Naive thymus-derived CD4-positive, alpha-beta T cell (primary cell): ENCODE measurements at regions of chr16 and their contacts with region 1.

Region 1: DNA sequence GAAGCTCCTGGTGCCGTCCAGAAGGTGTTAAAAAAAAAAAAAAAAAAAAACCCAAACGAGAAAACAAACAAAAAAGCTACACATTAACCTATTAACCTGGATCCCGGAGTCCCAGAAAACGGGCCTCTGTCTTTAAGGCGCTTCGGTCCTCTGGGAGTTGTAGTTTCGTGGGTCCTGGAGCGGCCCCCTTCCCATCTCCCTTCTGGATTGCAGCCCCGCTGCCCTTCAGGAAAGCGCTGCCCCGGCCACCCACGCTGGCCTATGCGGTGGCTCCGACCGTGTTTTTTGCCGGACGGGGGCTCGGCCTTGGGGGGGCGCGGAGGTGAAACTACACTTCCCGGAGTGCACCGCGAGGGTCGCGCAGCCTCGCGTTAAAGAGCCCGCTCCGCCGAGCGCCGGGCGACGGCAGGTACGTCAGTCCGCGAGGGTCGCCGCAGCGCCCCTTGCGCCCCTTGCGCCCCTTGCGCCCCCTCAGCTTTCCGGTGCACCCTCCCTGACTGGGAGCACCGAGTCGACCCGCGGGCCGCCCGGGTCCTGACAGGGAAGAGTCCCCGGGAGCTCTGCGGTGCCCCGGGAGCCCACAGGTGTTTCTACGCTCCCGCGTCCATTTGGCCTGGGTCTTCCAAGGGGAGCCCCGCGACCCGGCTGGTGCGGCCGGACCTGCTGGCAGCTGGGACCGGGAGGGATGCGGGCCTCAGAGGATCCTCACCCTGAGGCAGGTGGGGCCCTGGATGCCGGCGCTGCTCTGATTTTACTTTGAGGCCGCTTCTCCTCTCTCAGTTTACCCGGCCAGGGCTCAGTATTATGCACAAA is at the start of gene FCSK:
- DNase-seq: peak; percentile 63 to 88 (median 84)
- ATAC-seq: peak; percentile 94
- H3K4me3 ChIP-seq: peak within 1 kb of the TSS; percentile 82
- H3K4me3 Mint-ChIP-seq: peak within 1 kb of the TSS; percentile 90 to 95 (median 93)
- H3K27ac ChIP-seq: peak within 1 kb of the TSS; percentile 99
- H3K27ac Mint-ChIP-seq: peak within 1 kb of the TSS; percentile 81 to 95 (median 89)
- H3K4me1 ChIP-seq: peaks cover 8 to 12% of the 10 kb centered on the region in 2 donors
- H3K4me1 Mint-ChIP-seq: peaks cover 6 to 45% (median 37%) of the 10 kb centered on the region in 7 donors
- H3K27me3 ChIP-seq: no peaks in the 10 kb centered on the region
- H3K27me3 Mint-ChIP-seq: peaks cover 0 to 3% (median 0%) of the 10 kb centered on the region in 5 donors
- total RNA-seq, gene FCSK: 23.7 to 45.2 (median 36.7) TPM

Region 2: GRCh38 chr16:70342016-70342415 is 112.4 kb before region 1 on chr16:
- CTCF ChIA-PET with region 1: no interaction called
- POLR2A ChIA-PET with region 1: interaction called, 4 read pairs
- intact Hi-C with region 1: loop called (anchors 1 kb)
- DNase-seq: no peak
- ATAC-seq: no peak
- H3K4me3 ChIP-seq: no peak overlapping the region
- H3K4me3 Mint-ChIP-seq: no peak overlapping the region
- H3K27ac ChIP-seq: no peak overlapping the region
- H3K27ac Mint-ChIP-seq: peak overlapping the region in 3 of 9 donors; percentile 37 to 77 (median 74)
- H3K4me1 ChIP-seq: peaks cover 5 to 6% of the 10 kb centered on the region in 2 donors
- H3K4me1 Mint-ChIP-seq: peaks cover 5 to 16% (median 10%) of the 10 kb centered on the region in 7 donors
- H3K27me3 ChIP-seq: no peaks in the 10 kb centered on the region
- H3K27me3 Mint-ChIP-seq: no peaks in the 10 kb centered on the region

Region 3: DNA sequence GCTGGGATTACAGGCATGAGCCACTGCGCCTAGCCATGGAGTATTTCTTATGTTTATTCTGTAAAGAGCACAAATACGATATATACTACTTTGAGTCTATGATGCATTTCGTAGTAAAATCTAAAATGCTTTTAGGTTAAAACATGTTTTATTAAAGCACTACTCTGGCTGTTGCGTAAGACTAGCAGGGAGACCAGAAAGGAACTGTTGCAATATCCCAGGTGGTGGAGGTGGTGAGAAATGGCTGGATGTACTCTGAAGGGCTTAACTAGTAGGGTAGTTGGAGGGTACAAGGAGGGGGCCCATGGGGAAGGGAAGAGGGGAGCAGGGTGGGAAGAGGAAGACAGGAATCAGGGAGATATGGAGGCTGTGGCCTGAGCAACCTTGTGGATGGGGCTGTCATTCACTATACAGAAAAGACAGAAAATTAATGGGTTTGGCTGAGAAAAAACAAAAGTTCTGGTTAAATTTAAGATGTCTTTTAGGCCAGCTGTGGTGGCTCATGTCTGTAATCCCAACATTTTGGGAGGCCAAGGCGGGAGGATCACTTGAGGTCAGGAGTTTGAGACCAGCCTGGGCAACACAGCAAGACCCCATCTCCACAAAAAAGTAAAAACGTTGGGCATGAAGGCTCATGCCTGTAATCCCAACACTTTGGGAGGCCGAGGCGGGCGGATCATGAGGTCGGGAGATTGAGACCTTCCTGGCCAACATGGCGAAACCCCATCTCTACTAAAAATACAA is 51.3 kb before region 1 on chr16:
- CTCF ChIA-PET with region 1: interaction called, 7 read pairs
- POLR2A ChIA-PET with region 1: interaction called, 5 read pairs
- intact Hi-C with region 1: loop called (anchors 2 to 5 kb)
- DNase-seq: no peak
- ATAC-seq: no peak
- H3K4me3 ChIP-seq: no peak overlapping the region
- H3K4me3 Mint-ChIP-seq: peak overlapping the region; percentile 6 to 92 (median 30)
- H3K27ac ChIP-seq: no peak overlapping the region
- H3K27ac Mint-ChIP-seq: peak overlapping the region in 6 of 9 donors; percentile 14 to 90 (median 50)
- H3K4me1 ChIP-seq: peaks cover 13 to 26% of the 10 kb centered on the region in 2 donors
- H3K4me1 Mint-ChIP-seq: peaks cover 38 to 69% (median 47%) of the 10 kb centered on the region in 7 donors
- H3K27me3 ChIP-seq: no peaks in the 10 kb centered on the region
- H3K27me3 Mint-ChIP-seq: no peaks in the 10 kb centered on the region

Region 4: DNA sequence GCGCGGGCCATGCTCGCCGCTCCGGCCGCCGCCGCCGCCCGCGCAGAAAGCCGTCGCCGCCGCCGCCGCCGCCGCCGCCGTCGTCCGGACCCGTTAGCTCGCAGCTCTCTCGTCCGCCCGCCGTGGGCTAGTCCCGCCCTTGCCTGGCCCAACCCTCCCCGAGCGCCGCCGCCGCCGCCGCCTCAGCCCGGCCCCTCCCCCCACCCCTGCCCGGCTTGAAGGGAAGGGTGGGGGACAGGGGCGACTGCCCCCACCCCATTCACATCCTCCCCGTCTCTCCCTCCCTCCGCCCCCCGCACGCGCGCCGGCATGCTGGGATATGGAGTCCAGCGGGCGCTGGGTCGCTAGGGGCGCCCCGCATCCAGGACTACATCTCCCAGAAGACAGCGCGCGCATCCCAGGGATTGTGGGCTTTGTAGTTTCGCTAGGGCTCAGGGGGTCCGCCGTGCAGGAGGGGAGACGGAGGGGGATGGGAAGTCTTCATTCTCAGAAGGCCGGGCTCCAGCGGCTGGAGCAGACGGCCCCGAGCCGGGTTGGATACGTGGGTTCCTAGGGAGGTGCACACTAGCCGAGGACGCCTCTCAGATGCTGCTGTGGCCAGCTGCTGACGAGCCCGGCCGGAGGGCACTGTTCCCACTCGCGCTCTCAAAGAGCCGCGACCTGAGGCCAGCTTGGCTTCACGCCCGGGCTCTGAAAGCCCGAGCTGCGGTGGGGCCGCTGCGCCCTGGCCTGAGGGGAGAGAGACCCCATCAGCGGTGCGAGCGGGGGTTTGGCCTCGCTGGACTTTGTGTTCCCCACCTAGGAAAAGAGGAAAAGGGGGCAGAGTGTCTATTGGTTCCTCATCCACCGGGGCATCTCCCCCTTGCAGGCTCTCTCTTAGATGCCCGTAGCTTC is 15.2 kb before region 1 on chr16 and contains the start of gene ST3GAL2:
- CTCF ChIA-PET with region 1: interaction called, 5 read pairs
- POLR2A ChIA-PET with region 1: interaction called, 29 read pairs
- intact Hi-C with region 1: loop called (anchors 1 to 2 kb)
- DNase-seq: peak; percentile 84 to 94 (median 90)
- ATAC-seq: peak; percentile 99
- H3K4me3 ChIP-seq: peak within 1 kb of the TSS; percentile 82
- H3K4me3 Mint-ChIP-seq: peak within 1 kb of the TSS; percentile 92 to 99 (median 98)
- H3K27ac ChIP-seq: peak within 1 kb of the TSS; percentile 58
- H3K27ac Mint-ChIP-seq: peak within 1 kb of the TSS; percentile 84 to 97 (median 93)
- H3K4me1 ChIP-seq: peaks cover 11 to 23% of the 10 kb centered on the region in 2 donors
- H3K4me1 Mint-ChIP-seq: peaks cover 18 to 46% (median 37%) of the 10 kb centered on the region in 7 donors
- H3K27me3 ChIP-seq: no peaks in the 10 kb centered on the region
- H3K27me3 Mint-ChIP-seq: no peaks in the 10 kb centered on the region
- total RNA-seq, gene ST3GAL2: 16.6 to 35.9 (median 30.4) TPM

Region 5: DNA sequence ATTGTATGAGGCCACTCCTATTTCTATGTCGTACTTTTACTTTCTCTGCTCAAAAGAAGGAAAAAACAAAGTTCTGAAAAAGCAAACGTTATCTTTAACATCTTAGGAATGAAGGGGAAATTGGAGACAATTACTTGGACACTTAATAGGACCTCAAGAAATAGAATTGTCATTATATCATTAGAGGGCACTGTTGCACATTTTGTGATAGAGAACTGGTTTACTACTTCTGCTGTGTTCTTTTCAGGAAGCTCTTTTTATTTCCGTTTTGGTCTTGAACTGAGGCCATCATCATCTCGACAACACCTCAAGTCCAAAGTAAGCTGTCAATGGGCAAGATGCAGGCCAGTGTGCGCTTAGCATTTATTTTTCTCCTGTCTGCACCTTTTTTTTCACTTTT is 54.3 kb after region 1 on chr16:
- CTCF ChIA-PET with region 1: no interaction called
- POLR2A ChIA-PET with region 1: no interaction called
- intact Hi-C with region 1: no loop called
- DNase-seq: peak in 2 of 9 donors; percentile 5 to 16
- ATAC-seq: peak; percentile 63
- H3K4me3 ChIP-seq: no peak overlapping the region
- H3K4me3 Mint-ChIP-seq: no peak overlapping the region
- H3K27ac ChIP-seq: no peak overlapping the region
- H3K27ac Mint-ChIP-seq: peak overlapping the region in 8 of 9 donors; percentile 35 to 87 (median 70)
- H3K4me1 ChIP-seq: no peaks in the 10 kb centered on the region
- H3K4me1 Mint-ChIP-seq: peaks cover 6 to 13% (median 9%) of the 10 kb centered on the region in 7 donors
- H3K27me3 ChIP-seq: no peaks in the 10 kb centered on the region
- H3K27me3 Mint-ChIP-seq: no peaks in the 10 kb centered on the region

Region 6: GRCh38 chr16:70800781-70801530 is 346.5 kb after region 1 on chr16 and contains the start of gene VAC14:
- CTCF ChIA-PET with region 1: no interaction called
- POLR2A ChIA-PET with region 1: no interaction called
- intact Hi-C with region 1: loop called in 1 of 2 experiments (anchors 5 kb)
- DNase-seq: peak; percentile 96 to 99 (median 97)
- ATAC-seq: peak; percentile 99
- H3K4me3 ChIP-seq: peak within 1 kb of the TSS; percentile 90
- H3K4me3 Mint-ChIP-seq: peak within 1 kb of the TSS; percentile 90 to 98 (median 94)
- H3K27ac ChIP-seq: peak within 1 kb of the TSS; percentile 78
- H3K27ac Mint-ChIP-seq: peak within 1 kb of the TSS; percentile 84 to 95 (median 92)
- H3K4me1 ChIP-seq: peaks cover 11 to 17% of the 10 kb centered on the region in 2 donors
- H3K4me1 Mint-ChIP-seq: peaks cover 19 to 49% (median 44%) of the 10 kb centered on the region in 7 donors
- H3K27me3 ChIP-seq: no peaks in the 10 kb centered on the region
- H3K27me3 Mint-ChIP-seq: peaks cover 0 to 15% (median 0%) of the 10 kb centered on the region in 5 donors
- total RNA-seq, gene VAC14: 36.7 to 47.1 (median 45.9) TPM